ENCODE measurements at regions of chr10 and their contacts with region 1.

Region 1: GRCh38 chr10:35336084-35336831 is at the start of gene CCNY:
- DNase-seq: peak; percentile 42
- ATAC-seq: peak; percentile 87
- H3K4me3 ChIP-seq: peak within 1 kb of the TSS; percentile 95 to 98 (median 98)
- H3K27ac ChIP-seq: peak within 1 kb of the TSS; percentile 78
- H3K4me1 ChIP-seq: peaks cover 69% of the 10 kb centered on the region
- H3K27me3 ChIP-seq: no peaks in the 10 kb centered on the region; a peak in 2 of 5 replicates
- CTCF ChIP-seq: peak; percentile 8; the same call in 1 of the 2 replicates
- EP300 ChIP-seq: no peak
- POLR2A ChIP-seq: peak; percentile 50 to 79
- RAD21 ChIP-seq: 0 out of 2 replicates have a peak, but pooled peaks have one; percentile 8
- total RNA-seq, gene CCNY: 54.7 and 63.6 TPM in 2 replicates

Region 2: DNA sequence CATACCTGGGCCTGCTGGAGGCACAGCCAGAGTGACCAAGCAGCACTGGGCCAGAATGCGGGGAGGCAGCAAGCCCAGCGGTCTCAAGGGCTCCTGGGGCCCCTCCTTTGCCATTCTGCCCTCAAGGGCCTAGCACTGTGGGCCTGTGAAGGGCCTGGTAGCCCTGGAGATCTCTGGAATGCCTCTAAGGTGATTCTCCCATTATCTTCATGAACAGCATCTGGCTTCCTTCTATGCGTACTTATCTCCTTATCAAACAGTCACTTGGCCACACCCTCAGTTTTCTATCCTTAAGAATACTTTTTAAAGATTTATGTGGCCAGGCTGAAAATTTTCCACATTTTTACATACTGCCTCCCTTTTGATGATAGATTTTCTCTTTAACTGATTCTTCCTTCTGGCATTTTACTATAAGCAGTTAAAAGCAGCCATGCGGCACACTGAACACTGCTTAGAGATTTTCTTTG is 67.4 kb before region 1 on chr10:
- CTCF ChIA-PET with region 1: no interaction called
- POLR2A ChIA-PET with region 1: no interaction called
- in situ Hi-C with region 1: no loop called
- intact Hi-C with region 1: loop called (anchors 5 kb)
- DNase-seq: no peak
- ATAC-seq: no peak
- H3K4me3 ChIP-seq: no peak overlapping the region
- H3K27ac ChIP-seq: no peak overlapping the region
- H3K4me1 ChIP-seq: peaks cover 46% of the 10 kb centered on the region
- H3K27me3 ChIP-seq: no peaks in the 10 kb centered on the region
- CTCF ChIP-seq: no peak
- EP300 ChIP-seq: no peak
- POLR2A ChIP-seq: no peak
- RAD21 ChIP-seq: no peak

Region 3: GRCh38 chr10:35316218-35316967 is 19.9 kb before region 1 on chr10:
- CTCF ChIA-PET with region 1: no interaction called
- POLR2A ChIA-PET with region 1: no interaction called
- in situ Hi-C with region 1: no loop called
- intact Hi-C with region 1: no loop called
- DNase-seq: no peak
- ATAC-seq: no peak
- H3K4me3 ChIP-seq: no peak overlapping the region
- H3K27ac ChIP-seq: no peak overlapping the region
- H3K4me1 ChIP-seq: no peaks in the 10 kb centered on the region
- H3K27me3 ChIP-seq: no peaks in the 10 kb centered on the region
- CTCF ChIP-seq: no peak
- EP300 ChIP-seq: no peak
- POLR2A ChIP-seq: no peak
- RAD21 ChIP-seq: no peak

Region 4: DNA sequence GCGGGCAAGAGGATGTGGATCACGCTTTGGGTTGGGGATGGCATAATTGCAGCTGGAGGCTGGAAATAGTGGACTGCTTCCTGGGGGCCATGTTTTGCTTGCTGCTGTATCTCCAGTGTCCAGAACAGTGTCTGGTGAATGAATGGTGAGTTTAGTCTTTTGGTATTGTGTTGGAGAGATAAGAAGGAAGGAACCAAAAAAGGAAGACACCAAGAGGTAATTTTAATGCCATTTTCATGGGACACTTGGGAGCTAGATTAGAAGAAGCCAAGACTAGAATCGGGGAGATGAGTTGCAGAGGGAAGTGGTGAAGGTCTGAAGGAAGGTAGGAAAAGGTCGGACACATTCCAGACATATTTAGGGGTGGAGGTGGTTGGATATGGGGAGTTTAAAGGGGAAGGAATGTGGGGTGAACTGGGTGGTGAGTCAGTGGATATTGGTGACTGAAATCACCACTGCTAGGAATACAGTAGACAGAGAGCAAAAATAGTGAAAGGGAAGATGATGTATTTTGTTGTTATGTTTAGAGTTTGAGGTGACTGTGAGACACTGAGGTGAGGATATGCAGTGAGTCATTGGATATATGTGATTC is 76.7 kb after region 1 on chr10:
- CTCF ChIA-PET with region 1: no interaction called
- POLR2A ChIA-PET with region 1: no interaction called
- in situ Hi-C with region 1: no loop called
- intact Hi-C with region 1: loop called (anchors 5 kb)
- DNase-seq: no peak
- ATAC-seq: no peak; the same call in 2 of the 3 replicates
- H3K4me3 ChIP-seq: no peak overlapping the region
- H3K27ac ChIP-seq: no peak overlapping the region
- H3K4me1 ChIP-seq: peaks cover 65% of the 10 kb centered on the region
- H3K27me3 ChIP-seq: no peaks in the 10 kb centered on the region
- CTCF ChIP-seq: no peak
- EP300 ChIP-seq: no peak
- POLR2A ChIP-seq: no peak
- RAD21 ChIP-seq: no peak

Region 5: GRCh38 chr10:35523670-35524225 is 187.5 kb after region 1 on chr10:
- CTCF ChIA-PET with region 1: no interaction called
- POLR2A ChIA-PET with region 1: no interaction called
- in situ Hi-C with region 1: no loop called
- intact Hi-C with region 1: loop called (anchors 10 kb)
- DNase-seq: no peak
- ATAC-seq: no peak
- H3K4me3 ChIP-seq: no peak overlapping the region
- H3K27ac ChIP-seq: no peak overlapping the region
- H3K4me1 ChIP-seq: no peaks in the 10 kb centered on the region
- H3K27me3 ChIP-seq: no peaks in the 10 kb centered on the region
- CTCF ChIP-seq: no peak
- EP300 ChIP-seq: no peak
- POLR2A ChIP-seq: no peak
- RAD21 ChIP-seq: no peak

Region 6: DNA sequence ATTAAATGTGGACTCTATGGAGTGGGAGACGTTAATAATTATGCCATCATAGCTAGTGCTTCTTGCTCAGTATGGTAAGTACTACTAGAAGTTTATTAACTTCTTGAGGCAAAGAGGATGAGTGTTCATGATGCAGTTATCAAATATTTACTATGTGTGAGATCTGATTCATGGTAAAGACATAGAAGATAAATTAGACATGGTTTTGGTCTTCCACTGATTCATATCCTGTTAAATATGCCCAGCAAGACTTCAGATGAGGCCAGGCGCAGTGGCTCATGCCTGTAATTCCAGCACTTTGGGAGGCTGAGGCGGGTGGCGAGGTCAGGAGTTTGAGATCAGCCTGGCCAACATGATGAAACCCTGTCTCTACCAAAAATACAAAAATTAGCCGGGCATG is 1242.0 kb after region 1 on chr10:
- CTCF ChIA-PET with region 1: no interaction called
- POLR2A ChIA-PET with region 1: no interaction called
- in situ Hi-C with region 1: no loop called
- intact Hi-C with region 1: no loop called
- DNase-seq: no peak
- ATAC-seq: no peak
- H3K4me3 ChIP-seq: no peak overlapping the region
- H3K27ac ChIP-seq: no peak overlapping the region
- H3K4me1 ChIP-seq: no peaks in the 10 kb centered on the region
- H3K27me3 ChIP-seq: no peaks in the 10 kb centered on the region
- CTCF ChIP-seq: no peak
- EP300 ChIP-seq: no peak
- POLR2A ChIP-seq: no peak
- RAD21 ChIP-seq: no peak

Measured in HepG2 (cell line).